Head of caudate nucleus (tissue), 42 donors: ENCODE measurements at regions of chr16 and their contacts with region 1.

Region 1: DNA sequence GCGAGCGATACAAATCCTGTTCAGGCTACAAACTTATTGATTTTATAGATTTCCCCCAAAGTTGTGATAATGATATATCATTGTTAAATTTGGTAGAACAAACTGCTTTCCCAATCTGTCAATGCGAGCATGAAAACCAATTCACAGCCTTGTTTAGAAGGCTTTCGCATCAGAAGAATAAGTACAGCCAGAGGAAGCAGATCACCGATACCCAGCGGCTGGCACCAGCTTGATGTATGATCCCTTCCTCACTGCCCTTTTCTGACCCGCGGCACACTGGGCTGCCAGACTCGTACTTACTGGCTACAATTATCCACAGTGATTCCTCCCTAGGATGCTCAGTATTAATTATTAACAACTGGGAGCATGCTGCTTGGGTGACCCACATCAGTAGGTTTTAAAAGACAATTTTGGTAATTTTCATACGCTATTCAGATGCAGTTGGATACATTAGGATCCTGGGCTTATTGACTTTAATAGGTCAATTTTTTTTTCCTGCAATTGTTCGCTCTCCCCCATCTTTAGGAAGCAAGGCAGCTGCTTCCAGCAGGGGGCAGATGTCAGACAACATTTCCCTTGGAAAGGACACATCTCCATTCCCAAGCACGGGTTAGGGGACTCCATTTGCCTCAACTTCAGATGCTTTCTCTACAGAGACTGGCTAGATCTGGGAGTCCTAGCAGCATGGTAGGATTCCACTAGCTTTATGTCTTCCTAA is 582.7 kb upstream of the PSMD7 start:
- DNase-seq: peak in 41 of 42 donors; percentile 36 to 87 (median 67)

Region 2: DNA sequence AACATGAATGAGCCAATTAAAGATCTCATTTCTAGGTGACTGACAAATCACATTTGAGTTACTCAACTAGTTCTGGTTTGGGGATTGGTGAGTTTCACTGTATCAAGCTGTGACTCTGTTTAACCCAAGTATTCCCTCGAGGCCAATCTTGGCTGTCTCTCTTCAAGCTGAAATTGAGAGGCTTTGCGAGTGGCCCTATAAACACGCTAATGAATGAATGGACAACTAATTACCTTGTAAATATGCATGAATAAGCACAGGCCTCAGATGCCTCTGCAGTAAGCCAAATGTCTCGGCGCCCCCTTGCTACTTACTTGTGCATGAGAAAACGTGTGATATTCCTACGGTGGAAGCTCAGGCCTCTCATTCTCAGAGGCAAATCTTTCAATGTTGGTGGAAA is 132.4 kb after region 1 on chr16:
- intact Hi-C with region 1: loop called (anchors 10 kb)
- DNase-seq: peak in 39 of 42 donors; percentile 5 to 68 (median 35)